ENCODE measurements at regions of chr16 and their contacts with region 1.

Region 1: GRCh38 chr16:1983544-1984346 is at the start of gene GFER:
- DNase-seq: no peak
- ATAC-seq: peak; percentile 84
- H3K4me3 ChIP-seq: peak within 1 kb of the TSS; percentile 73 to 76
- H3K27ac ChIP-seq: peak within 1 kb of the TSS; percentile 92
- H3K4me1 ChIP-seq: peaks cover 49% of the 10 kb centered on the region
- H3K27me3 ChIP-seq: no peaks in the 10 kb centered on the region
- CTCF ChIP-seq: peak; percentile 77; the same call in 1 of the 2 replicates
- total RNA-seq, gene GFER: 49.2 TPM

Region 2: DNA sequence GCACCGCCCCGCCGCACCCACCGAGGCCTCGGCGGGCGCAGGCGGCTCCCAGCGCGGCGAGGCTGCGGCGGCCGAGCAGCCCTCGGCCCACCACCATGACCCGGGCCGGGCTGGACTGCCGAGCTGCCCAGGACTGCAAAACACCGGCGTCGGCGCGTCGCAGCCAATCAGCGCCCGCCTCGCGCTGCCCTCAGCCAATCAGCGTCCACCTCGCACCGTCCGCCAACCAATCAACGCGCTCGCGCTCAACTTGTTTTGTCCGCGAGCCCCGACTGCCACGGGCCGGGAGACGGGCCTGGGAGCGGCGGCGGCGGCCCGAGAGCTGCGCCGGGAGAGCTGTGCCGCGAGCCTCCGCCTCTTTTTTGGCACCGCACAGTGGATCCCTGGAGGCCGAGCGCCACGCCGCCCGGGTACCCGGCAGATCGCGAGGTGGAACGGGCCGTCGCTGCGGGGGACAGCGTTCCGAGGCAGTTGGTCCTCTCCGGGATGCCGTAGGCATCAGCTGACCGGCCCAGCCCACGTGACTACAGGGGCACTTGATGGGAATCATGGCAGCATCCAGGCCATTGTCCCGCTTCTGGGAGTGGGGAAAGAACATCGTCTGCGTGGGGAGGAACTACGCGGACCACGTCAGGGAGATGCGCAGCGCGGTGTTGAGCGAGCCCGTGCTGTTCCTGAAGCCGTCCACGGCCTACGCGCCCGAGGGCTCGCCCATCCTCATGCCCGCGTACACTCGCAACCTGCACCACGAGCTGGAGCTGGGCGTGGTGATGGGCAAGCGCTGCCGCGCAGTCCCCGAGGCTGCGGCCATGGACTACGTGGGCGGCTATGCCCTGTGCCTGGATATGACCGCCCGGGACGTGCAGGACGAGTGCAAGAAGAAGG is 156.8 kb before region 1 on chr16 and contains the starts of genes FAHD1 and HAGH:
- CTCF ChIA-PET with region 1: interaction called, 13 read pairs
- POLR2A ChIA-PET with region 1: no interaction called
- in situ Hi-C with region 1: no loop called
- intact Hi-C with region 1: no loop called
- DNase-seq: peak; percentile 85
- ATAC-seq: peak; percentile 93
- H3K4me3 ChIP-seq: peak within 1 kb of the TSS; percentile 99 to 100
- H3K27ac ChIP-seq: peak within 1 kb of the TSS; percentile 96
- H3K4me1 ChIP-seq: peaks cover 17% of the 10 kb centered on the region
- H3K27me3 ChIP-seq: no peaks in the 10 kb centered on the region
- CTCF ChIP-seq: no peak
- total RNA-seq, gene FAHD1: 34.6 TPM
- total RNA-seq, gene HAGH: 58.9 TPM

Region 3: DNA sequence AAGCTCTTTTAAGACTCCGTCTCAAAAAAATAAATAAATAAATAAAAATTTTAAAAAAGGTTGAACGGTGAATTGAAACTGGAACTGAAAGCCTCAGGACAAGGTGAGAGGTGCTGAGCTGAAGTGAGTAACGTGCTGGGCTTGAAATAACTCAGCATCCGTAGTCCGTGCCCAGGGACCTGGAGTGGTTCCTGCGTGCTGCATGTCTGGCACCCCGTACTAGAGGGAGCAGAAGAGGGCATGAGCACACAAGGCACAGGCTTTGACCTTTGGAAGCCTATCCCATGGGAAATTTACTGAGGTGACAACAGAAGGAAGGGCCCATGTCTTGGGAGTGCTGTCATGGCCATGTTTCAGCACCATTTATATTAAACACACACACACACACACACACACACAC is 107.3 kb before region 1 on chr16:
- CTCF ChIA-PET with region 1: no interaction called
- POLR2A ChIA-PET with region 1: no interaction called
- in situ Hi-C with region 1: no loop called
- intact Hi-C with region 1: no loop called
- DNase-seq: no peak
- ATAC-seq: no peak
- H3K4me3 ChIP-seq: no peak overlapping the region
- H3K27ac ChIP-seq: no peak overlapping the region
- H3K4me1 ChIP-seq: peaks cover 13% of the 10 kb centered on the region
- H3K27me3 ChIP-seq: no peaks in the 10 kb centered on the region
- CTCF ChIP-seq: no peak